Activated T-helper 1 cell treated with anti-CD3 and anti-CD28 coated beads, Interleukin-12 subunit alpha, Interleukin-12 subunit beta, Interleukin-2, Interleukin-4 antibody, amounts not matched to agents 30 ng/mL and 10 ng/mL and 1 ng/mL, durations not matched to agents 14 hours and 24 hours and 36 hours (primary cell): ENCODE measurements at regions of chr12 and their contacts with region 1.

Region 1: DNA sequence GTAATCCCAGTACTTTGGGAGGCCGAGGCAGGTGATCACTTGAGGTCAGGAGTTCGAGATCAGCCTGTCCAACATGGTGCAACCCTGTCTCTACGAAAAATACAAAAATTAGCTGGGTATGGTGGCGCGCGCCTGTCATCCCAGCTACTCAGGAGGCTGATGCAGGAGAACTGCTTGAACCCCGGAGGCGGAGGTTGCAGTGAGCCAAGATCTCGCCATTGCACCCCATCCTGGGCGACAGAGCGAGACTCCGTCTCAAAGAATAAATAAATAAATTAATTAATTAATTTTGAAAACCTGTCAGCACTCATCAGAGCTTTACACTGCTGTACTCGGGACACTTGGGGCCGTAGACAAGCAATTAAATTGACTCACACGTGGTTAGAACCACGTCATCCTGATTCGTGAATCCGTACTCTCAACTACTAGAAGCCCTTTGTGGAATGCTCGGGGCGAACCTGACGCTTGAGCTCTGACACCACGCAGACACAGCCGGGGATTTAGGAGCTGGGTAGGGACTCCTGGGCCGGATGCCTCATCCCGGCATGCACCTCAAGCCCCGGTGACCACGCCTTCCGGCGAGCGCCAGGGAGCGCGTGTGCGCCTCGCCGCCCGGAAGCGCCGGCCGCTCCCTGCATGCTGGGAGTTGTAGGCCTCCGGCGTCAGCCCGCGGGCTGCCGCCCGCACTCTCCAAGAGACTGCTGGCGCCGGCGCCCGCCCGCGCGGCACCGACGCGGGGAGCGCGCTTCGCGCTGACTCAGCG is at the start of gene XPOT:
- DNase-seq: peak; percentile 92
- H3K4me3 Mint-ChIP-seq: peak within 1 kb of the TSS; percentile 95
- H3K27ac Mint-ChIP-seq: peak within 1 kb of the TSS; percentile 99
- H3K4me1 Mint-ChIP-seq: peaks cover 20% of the 10 kb centered on the region
- H3K27me3 Mint-ChIP-seq: no peaks in the 10 kb centered on the region
- total RNA-seq, gene XPOT: 145 and 146 TPM in 2 replicates

Region 2: DNA sequence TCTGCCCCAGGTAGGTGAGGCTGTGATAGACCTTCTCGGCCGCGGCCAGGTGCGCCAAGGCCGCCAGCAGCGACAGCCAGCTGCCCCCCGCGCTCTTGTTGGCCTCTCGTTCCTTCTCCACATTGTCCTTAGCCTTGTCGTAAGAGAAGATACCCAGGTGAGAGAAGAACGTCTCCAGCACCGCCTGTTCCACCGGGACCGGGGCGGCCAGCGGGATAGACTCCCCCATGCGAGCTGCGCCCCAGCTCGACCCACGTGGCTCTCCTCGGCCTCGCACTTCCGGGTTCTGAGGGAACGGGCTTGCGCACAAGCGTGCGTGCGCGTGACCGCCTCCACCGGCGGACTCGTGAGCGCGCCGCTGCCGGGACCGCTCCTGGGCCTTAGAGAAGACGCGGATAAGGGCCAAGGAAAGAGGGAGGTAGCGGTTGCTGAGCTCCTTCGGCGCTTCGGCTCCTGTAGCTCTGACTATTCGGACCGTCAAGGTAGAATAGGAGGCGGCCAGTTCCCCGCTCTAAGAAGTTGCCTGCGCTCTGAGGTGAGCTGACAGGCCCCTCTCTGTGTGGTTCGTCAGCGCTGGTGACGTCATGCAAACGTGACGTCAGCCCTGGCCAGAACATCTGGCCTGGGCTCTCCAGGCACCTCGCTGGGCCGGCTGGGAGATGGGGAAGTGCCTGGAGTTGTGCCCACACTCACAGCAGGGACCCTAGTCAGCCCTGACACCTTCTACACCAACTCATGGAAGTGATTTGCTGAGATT is 181.7 kb before region 1 on chr12 and contains the start of gene KICS2:
- intact Hi-C with region 1: loop called (anchors 1 kb)
- DNase-seq: peak; percentile 88
- H3K4me3 Mint-ChIP-seq: peak within 1 kb of the TSS; percentile 100
- H3K27ac Mint-ChIP-seq: peak within 1 kb of the TSS; percentile 100
- H3K4me1 Mint-ChIP-seq: peaks cover 33% of the 10 kb centered on the region
- H3K27me3 Mint-ChIP-seq: peaks cover 14% of the 10 kb centered on the region
- total RNA-seq, gene KICS2: 12.7 and 14.9 TPM in 2 replicates

Region 3: GRCh38 chr12:64236549-64236948 is 167.3 kb before region 1 on chr12:
- intact Hi-C with region 1: no loop called
- DNase-seq: no peak
- H3K4me3 Mint-ChIP-seq: no peak overlapping the region
- H3K27ac Mint-ChIP-seq: no peak overlapping the region
- H3K4me1 Mint-ChIP-seq: no peaks in the 10 kb centered on the region
- H3K27me3 Mint-ChIP-seq: peaks cover 9% of the 10 kb centered on the region

Region 4: GRCh38 chr12:64419696-64420095 is 15.8 kb after region 1 on chr12:
- intact Hi-C with region 1: loop called (anchors 1 kb)
- DNase-seq: no peak
- H3K4me3 Mint-ChIP-seq: no peak overlapping the region
- H3K27ac Mint-ChIP-seq: peak overlapping the region; percentile 73
- H3K4me1 Mint-ChIP-seq: peaks cover 19% of the 10 kb centered on the region
- H3K27me3 Mint-ChIP-seq: no peaks in the 10 kb centered on the region

Region 5: DNA sequence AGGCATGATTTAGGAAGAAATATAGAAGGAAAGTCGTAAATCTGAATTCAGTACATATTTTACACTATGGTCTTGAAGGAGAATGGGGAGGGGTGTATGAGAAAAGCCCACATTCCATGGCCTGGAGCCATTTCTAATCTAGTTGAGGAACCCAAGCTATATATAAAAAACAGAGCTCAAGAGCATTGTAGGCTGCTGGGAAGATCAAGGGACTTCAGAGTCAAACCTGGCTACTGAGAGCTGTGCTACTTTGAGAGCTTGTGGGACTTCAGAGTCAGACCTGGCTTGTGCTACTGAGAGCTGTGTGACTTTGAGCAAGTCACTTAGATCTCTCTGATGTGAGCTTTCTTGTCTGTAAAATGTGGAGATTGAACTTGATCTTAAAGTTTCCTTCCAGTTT is 106.8 kb after region 1 on chr12:
- intact Hi-C with region 1: no loop called
- DNase-seq: no peak
- H3K4me3 Mint-ChIP-seq: no peak overlapping the region
- H3K27ac Mint-ChIP-seq: no peak overlapping the region
- H3K4me1 Mint-ChIP-seq: peaks cover 5% of the 10 kb centered on the region
- H3K27me3 Mint-ChIP-seq: peaks cover 13% of the 10 kb centered on the region

Region 6: DNA sequence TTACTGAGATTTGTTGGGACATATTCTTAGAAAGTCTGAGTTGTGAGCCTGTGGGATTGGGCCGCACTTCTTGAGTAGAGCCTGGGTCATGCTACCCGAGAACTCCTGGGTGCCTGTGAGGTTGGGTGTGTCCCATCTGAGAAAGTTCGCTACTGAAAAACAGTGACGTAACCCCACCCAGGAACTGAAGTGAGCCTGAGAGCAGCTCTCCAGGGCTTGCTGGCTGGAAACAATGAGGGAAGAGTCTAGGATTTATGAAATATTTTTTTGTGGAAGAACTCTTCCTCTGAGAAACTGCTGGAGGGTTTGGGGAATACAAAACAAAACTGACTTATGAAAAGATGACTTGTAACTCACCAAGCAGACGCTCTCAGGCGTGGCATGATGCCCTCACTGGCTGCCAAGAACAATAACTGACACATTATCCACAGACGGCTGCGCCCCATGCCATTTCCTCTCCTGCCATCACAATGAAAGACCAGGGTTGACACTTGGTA is 275.6 kb after region 1 on chr12:
- intact Hi-C with region 1: loop called (anchors 10 kb)
- DNase-seq: peak; percentile 51
- H3K4me3 Mint-ChIP-seq: peak overlapping the region; percentile 53
- H3K27ac Mint-ChIP-seq: peak overlapping the region; percentile 84
- H3K4me1 Mint-ChIP-seq: peaks cover 82% of the 10 kb centered on the region
- H3K27me3 Mint-ChIP-seq: no peaks in the 10 kb centered on the region